Activated CD4-positive, alpha-beta memory T cell treated with anti-CD3 and anti-CD28 coated beads, Interleukin-2, amount 10 ng/mL, durations not matched to agents 7 days and 5 days (primary cell): ENCODE measurements at regions of chr1 and their contacts with region 1.

Region 1: DNA sequence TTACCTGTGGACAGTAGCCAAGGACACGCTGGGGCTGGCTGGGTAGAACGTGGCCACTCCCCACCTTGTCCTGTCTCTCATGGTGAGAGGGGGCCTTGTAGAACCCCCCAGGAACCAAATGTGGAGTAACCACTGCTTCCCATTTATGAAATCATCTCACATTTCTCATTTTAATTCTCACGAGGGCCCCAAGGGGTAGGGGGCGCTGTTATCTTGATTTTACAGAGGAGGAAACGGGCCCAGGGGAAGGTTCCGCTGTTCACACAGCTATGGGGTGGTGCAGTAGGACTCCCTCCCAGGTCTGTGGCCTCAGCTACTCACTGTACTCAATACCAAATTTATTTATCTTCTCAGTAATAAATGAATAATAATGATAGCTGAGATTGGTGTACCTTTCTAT is 5.5 kb downstream of the SMPDL3B start:
- DNase-seq: peak; percentile 79
- H3K4me3 Mint-ChIP-seq: no peak overlapping the region
- H3K27ac Mint-ChIP-seq: peak overlapping the region; percentile 28
- H3K4me1 Mint-ChIP-seq: peaks cover 56% of the 10 kb centered on the region
- H3K27me3 Mint-ChIP-seq: peaks cover 7% of the 10 kb centered on the region

Region 2: GRCh38 chr1:27682351-27682944 is 257.8 kb before region 1 on chr1:
- CTCF ChIA-PET with region 1: no interaction called
- POLR2A ChIA-PET with region 1: no interaction called
- DNase-seq: no peak
- H3K4me3 Mint-ChIP-seq: no peak overlapping the region
- H3K27ac Mint-ChIP-seq: no peak overlapping the region
- H3K4me1 Mint-ChIP-seq: no peaks in the 10 kb centered on the region
- H3K27me3 Mint-ChIP-seq: peaks cover 13% of the 10 kb centered on the region

Region 3: GRCh38 chr1:27928216-27928954 is 11.9 kb before region 1 on chr1:
- CTCF ChIA-PET with region 1: interaction called, 22 read pairs
- POLR2A ChIA-PET with region 1: interaction called, 4 read pairs
- DNase-seq: no peak
- H3K4me3 Mint-ChIP-seq: no peak overlapping the region
- H3K27ac Mint-ChIP-seq: no peak overlapping the region
- H3K4me1 Mint-ChIP-seq: peaks cover 24% of the 10 kb centered on the region
- H3K27me3 Mint-ChIP-seq: peaks cover 12% of the 10 kb centered on the region

Region 4: DNA sequence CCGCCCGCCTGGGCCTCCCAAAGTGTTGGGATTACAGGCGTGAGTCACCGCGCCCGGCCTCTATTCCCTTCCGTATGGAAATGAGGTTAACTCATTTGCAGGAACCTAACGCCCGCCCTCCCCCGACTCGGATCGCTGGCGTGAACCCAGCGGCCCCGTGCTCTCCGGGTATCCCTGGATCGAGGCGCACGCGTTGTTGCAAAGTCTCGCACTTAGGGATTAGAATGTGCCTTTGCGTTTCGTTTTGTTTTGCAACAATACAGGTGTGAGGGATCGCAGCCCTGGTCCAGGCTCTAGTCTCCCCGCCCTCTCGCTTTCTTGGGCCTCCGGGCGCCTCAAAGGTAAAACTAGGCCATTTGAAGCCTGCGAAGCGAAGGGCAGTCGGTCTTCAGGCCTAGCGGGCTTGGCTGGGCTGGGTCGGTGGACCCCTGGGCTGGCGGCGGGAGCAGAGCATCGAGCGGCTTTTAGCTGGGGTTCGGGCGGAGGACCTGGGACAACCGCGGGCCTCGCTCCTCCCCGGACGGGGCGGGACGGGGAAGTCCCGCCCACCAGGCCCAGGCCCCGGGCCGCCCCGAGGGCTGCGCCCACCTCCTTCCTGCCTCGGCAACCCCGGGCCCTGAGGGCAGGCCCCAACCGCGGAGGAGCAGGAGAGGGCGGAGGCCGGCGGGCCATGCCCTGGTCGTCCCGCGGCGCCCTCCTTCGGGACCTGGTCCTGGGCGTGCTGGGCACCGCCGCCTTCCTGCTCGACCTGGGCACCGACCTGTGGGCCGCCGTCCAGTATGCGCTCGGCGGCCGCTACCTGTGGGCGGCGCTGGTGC is 19.3 kb after region 1 on chr1 and contains the start of gene XKR8:
- CTCF ChIA-PET with region 1: interaction called, 5 read pairs
- POLR2A ChIA-PET with region 1: interaction called, 50 read pairs
- DNase-seq: peak; percentile 89
- H3K4me3 Mint-ChIP-seq: peak within 1 kb of the TSS; percentile 80
- H3K27ac Mint-ChIP-seq: peak within 1 kb of the TSS; percentile 77
- H3K4me1 Mint-ChIP-seq: peaks cover 38% of the 10 kb centered on the region
- H3K27me3 Mint-ChIP-seq: no peaks in the 10 kb centered on the region
- total RNA-seq, gene XKR8: 7.9 to 10.0 TPM

Region 5: DNA sequence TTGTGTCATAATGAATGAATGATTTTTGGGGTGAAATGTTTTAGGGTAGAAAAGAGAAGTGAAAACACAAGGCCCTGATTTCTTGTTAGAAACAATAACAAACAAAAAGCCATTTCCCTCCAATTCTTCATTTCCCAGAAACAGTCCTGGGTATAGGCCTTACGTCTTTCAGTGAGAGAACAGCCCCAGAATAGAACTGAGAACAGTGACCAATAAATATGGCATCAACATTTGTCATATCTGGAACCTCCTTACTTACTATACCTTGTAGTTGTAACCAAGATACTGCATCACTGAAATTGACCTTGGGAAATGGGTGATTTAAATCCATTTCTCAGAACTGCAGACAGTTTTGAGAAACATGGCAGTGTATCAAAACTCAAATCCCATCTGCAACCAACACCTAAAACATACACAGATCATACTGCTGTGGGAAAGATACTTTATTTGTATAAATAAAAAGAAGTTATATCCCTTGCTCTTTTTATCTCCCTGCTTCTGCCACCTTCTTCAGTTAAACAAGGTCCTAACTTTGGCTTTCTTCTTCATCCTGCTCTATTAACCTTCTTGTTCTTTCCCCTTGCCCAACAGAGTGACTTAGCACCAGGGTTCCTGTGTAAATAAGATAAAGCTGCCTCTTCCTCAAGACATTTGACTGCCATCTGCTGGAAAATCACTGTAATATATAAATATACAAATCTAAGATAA is 39.0 kb after region 1 on chr1:
- CTCF ChIA-PET with region 1: interaction called, 11 read pairs
- POLR2A ChIA-PET with region 1: interaction called, 3 read pairs
- DNase-seq: no peak
- H3K4me3 Mint-ChIP-seq: no peak overlapping the region
- H3K27ac Mint-ChIP-seq: no peak overlapping the region
- H3K4me1 Mint-ChIP-seq: peaks cover 5% of the 10 kb centered on the region
- H3K27me3 Mint-ChIP-seq: no peaks in the 10 kb centered on the region